HepG2 (cell line): ENCODE measurements at regions of chr4 and their contacts with region 1.

Region 1: GRCh38 chr4:163048447-163048846 is 118.2 kb downstream of the NAF1 start:
- DNase-seq: peak; percentile 21
- ATAC-seq: peak; percentile 79
- H3K4me3 ChIP-seq: no peak overlapping the region
- H3K27ac ChIP-seq: no peak overlapping the region
- H3K4me1 ChIP-seq: no peaks in the 10 kb centered on the region
- H3K27me3 ChIP-seq: no peaks in the 10 kb centered on the region
- CTCF ChIP-seq: peak; percentile 47
- EP300 ChIP-seq: no peak
- POLR2A ChIP-seq: no peak
- RAD21 ChIP-seq: no peak

Region 2: GRCh38 chr4:163191999-163192398 is 143.6 kb after region 1 on chr4:
- CTCF ChIA-PET with region 1: interaction called, 12 read pairs
- POLR2A ChIA-PET with region 1: no interaction called
- in situ Hi-C with region 1: no loop called
- intact Hi-C with region 1: loop called (anchors 1 kb)
- DNase-seq: peak; percentile 26
- ATAC-seq: peak; percentile 86
- H3K4me3 ChIP-seq: no peak overlapping the region
- H3K27ac ChIP-seq: no peak overlapping the region
- H3K4me1 ChIP-seq: no peaks in the 10 kb centered on the region
- H3K27me3 ChIP-seq: peaks cover 0 to under 1% of the 10 kb centered on the region in 2 experiments; a peak in 2 of 5 replicates
- CTCF ChIP-seq: peak; percentile 51
- EP300 ChIP-seq: no peak
- POLR2A ChIP-seq: no peak
- RAD21 ChIP-seq: peak; percentile 30; the same call in 1 of the 2 replicates

Region 3: GRCh38 chr4:163332500-163333406 is 284.3 kb after region 1 on chr4 and contains the start of gene NPY1R:
- CTCF ChIA-PET with region 1: interaction called, 3 read pairs
- POLR2A ChIA-PET with region 1: no interaction called
- in situ Hi-C with region 1: no loop called
- intact Hi-C with region 1: loop called (anchors 1 kb)
- DNase-seq: peak; percentile 24
- ATAC-seq: peak; percentile 95
- H3K4me3 ChIP-seq: peak within 1 kb of the TSS in 2 of 3 experiments; percentile 21 to 52; a peak in 3 of 6 replicates
- H3K27ac ChIP-seq: no peak within 1 kb of the TSS
- H3K4me1 ChIP-seq: no peaks in the 10 kb centered on the region
- H3K27me3 ChIP-seq: no peaks in the 10 kb centered on the region
- CTCF ChIP-seq: peak; percentile 71
- EP300 ChIP-seq: no peak
- POLR2A ChIP-seq: no peak
- RAD21 ChIP-seq: peak; percentile 34; the same call in 1 of the 2 replicates
- total RNA-seq, gene NPY1R: not detected in 2 replicates